ENCODE measurements at regions of chr2 and their contacts with region 1.

Region 1: GRCh38 chr2:96145036-96145847 is at the start of gene DUSP2:
- DNase-seq: peak; percentile 78 to 93 (median 87)
- ATAC-seq: peak; percentile 40 to 54
- H3K4me3 Mint-ChIP-seq: peak within 1 kb of the TSS; percentile 91 to 97 (median 95)
- H3K27ac Mint-ChIP-seq: peak within 1 kb of the TSS; percentile 97 to 100 (median 100)
- H3K4me1 Mint-ChIP-seq: peaks cover 27 to 77% (median 68%) of the 10 kb centered on the region in 4 donors
- H3K27me3 Mint-ChIP-seq: peaks cover 0 to 1% (median 0%) of the 10 kb centered on the region in 5 donors
- polyA plus RNA-seq, gene DUSP2: 24.3 to 459 (median 60.7) TPM

Region 2: DNA sequence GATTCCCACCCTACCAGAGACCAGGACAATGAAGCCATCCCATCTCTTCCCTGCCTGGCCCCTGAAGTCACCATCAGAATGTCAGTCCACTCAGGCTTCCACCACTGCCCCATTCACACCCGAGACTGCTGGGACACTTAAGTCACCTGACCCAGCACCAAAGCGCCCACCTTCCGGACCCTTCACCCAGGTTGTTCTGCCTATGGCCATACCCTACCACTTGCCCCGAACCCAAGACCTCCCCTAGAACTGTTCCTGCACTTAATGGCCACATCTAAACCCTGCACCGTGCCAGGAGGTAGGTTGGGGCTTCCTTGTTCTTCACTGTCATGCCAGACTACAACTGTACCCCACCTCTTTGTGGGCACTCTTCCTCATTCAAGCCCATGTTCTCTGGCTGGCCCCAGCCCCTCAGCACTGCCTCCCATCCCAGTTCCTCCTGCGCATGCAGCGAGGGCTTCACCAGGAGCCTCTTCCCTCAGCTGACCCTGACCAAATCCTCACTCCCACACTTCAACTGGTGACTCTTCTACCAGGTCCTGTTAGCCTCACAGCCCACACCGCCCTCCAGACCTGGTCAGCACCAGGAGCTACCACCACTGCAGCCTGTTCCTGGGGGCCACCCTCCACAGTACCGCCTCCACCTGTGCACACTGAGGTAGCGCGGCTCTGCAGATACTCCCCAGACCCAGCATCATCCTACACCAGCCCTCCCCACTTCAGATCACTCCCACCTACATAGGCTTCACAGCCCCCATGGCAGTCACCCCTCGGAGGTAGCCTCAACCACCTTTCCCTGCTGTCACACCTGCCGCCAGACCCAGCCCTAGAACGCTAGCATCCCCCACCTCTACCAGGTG is 20.6 kb before region 1 on chr2:
- POLR2A ChIA-PET with region 1: no interaction called
- DNase-seq: no peak
- ATAC-seq: no peak
- H3K4me3 Mint-ChIP-seq: no peak overlapping the region
- H3K27ac Mint-ChIP-seq: peak overlapping the region in 1 of 10 donors; percentile 33
- H3K4me1 Mint-ChIP-seq: peaks cover 7 to 20% (median 10%) of the 10 kb centered on the region in 4 donors
- H3K27me3 Mint-ChIP-seq: peaks cover 12 to 41% (median 29%) of the 10 kb centered on the region in 5 donors

Region 3: DNA sequence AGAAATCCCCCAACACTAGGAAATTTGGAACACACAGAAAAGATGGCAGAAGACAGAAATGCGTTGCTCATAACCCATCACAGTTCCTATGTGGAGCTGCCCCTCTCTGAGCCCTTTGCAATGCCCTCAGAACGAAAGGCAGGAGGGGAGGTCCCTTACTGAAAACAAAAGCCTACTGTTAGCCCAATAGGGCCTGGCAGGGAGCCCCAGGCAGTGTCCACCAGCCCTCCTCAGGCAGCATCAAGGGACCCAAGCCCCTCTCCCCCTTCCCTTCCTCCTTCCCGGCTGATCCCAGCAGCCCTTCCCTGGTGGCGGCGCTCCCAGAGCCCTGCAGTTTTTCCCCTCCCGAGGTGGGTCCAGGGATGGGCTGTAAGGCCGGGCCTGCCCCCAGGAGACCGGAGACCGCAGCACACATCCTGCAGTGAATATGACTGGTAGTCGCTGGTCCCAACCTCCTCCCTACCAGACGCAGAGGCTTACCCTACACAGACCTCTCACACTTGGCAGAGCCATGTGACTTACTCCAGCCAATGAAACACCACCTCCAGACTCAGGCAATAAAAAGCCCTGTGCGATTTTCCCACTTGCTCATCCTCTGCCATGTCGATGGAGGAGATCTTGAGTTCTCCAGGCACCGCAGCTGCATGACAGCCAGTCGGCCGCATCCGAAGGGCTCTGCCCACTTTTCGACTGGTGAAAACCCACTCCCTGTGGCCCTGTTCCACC is 19.4 kb after region 1 on chr2:
- POLR2A ChIA-PET with region 1: interaction called, 373 read pairs
- DNase-seq: peak in 8 of 10 donors; percentile 40 to 79 (median 63)
- ATAC-seq: peak; percentile 69 to 82
- H3K4me3 Mint-ChIP-seq: peak overlapping the region; percentile 62 to 88 (median 80)
- H3K27ac Mint-ChIP-seq: peak overlapping the region; percentile 98 to 100 (median 98)
- H3K4me1 Mint-ChIP-seq: peaks cover 28 to 62% (median 51%) of the 10 kb centered on the region in 4 donors
- H3K27me3 Mint-ChIP-seq: no peaks in the 10 kb centered on the region

Region 4: DNA sequence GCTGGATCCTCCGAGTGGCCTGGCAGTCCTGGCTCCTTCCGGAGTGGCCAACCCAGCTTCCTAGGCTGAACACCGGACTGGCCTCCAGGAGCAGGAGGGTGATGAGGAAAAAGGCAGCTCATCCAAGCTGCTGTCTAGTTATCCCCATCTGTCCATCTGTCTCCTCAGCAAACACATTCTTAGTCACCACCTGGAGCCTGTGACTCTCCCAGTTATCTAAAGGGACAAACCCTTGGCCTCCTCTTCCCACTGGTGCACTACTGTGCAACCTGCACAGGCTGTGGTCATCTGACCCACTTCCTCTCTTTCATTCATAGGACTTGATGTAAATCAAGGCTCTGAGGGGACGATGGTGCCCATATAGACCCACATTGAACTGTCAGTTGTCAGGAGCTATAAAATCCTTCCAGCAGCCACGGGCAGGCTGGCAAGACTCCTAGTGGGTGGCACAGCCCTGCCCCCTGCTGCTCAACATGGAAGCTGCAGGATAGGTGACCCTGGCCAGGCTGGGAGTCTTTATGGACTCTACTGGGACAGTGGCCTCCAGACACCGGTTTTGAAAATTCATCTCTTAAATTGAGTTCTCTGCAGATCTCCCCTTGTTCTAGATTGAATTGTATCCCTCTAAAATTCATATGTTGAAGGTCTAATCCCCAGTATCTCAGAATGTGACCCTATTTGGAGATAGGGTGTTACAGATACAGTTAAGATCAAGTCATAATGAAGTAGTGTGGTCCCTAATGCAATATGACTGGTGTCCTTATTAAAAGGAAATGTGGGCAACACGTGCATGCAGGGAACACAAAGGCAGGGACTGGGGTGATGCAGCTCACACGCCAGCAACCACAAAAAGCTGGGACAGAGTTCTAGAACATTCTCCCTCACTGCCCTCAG is 29.3 kb after region 1 on chr2:
- POLR2A ChIA-PET with region 1: interaction called, 175 read pairs
- DNase-seq: peak; percentile 68 to 91 (median 82)
- ATAC-seq: peak; percentile 99 to 100
- H3K4me3 Mint-ChIP-seq: peak overlapping the region in 1 of 10 donors; percentile 45
- H3K27ac Mint-ChIP-seq: peak overlapping the region; percentile 40 to 92 (median 86)
- H3K4me1 Mint-ChIP-seq: peaks cover 6 to 14% (median 10%) of the 10 kb centered on the region in 4 donors
- H3K27me3 Mint-ChIP-seq: no peaks in the 10 kb centered on the region